Right cardiac atrium (tissue), 5 donors: ENCODE measurements at regions of chr11 and their contacts with region 1.

Region 1: GRCh38 chr11:134068829-134069425 is at the start of gene JAM3:
- DNase-seq: peak; percentile 97 to 99 (median 99)
- ATAC-seq: peak; percentile 97 to 98
- H3K4me3 ChIP-seq: peak within 1 kb of the TSS; percentile 52
- H3K27ac ChIP-seq: peak within 1 kb of the TSS; percentile 53
- H3K4me1 ChIP-seq: no peaks in the 10 kb centered on the region
- H3K27me3 ChIP-seq: no peaks in the 10 kb centered on the region
- total RNA-seq, gene JAM3: 44.5 to 45.5 (median 44.9) TPM

Region 2: GRCh38 chr11:134124660-134125451 is 55.9 kb after region 1 on chr11:
- intact Hi-C with region 1: loop called in 3 of 4 experiments (anchors 5 kb)
- DNase-seq: peak; percentile 56 to 87 (median 82)
- ATAC-seq: peak; percentile 73 to 75
- H3K4me3 ChIP-seq: peak overlapping the region; percentile 59
- H3K27ac ChIP-seq: peak overlapping the region; percentile 24
- H3K4me1 ChIP-seq: no peaks in the 10 kb centered on the region
- H3K27me3 ChIP-seq: no peaks in the 10 kb centered on the region